Activated CD4-positive, alpha-beta T cell treated with anti-CD3 and anti-CD28 coated beads, Interleukin-2, amount 10 ng/mL, durations not matched to agents 7 days and 5 days (primary cell): ENCODE measurements at regions of chr2 and their contacts with region 1.

Region 1: DNA sequence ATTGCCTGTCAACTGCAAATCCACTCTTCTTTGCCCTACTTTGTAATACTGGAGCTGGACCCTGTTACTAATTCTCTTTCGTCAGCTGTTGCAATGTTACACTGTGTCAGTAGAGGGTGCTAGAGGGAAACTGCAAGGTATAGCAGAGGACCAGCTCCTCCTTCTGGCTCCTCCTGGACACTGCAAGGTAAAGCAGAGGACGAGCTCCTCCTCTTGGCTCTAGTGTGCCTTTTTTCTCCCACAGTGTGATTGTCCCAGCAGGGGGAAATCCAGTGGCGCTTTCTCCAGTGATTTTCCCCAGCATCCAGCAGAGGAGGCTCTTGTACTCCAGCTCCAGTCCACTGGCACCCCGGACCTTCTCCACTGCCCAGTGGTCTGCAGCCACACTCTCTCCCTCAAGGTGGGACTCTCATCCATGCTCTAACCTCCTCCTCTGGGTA is 95.6 kb downstream of the CAPN13 start:
- DNase-seq: peak; percentile 93
- H3K4me3 Mint-ChIP-seq: no peak overlapping the region
- H3K27ac Mint-ChIP-seq: no peak overlapping the region
- H3K4me1 Mint-ChIP-seq: peaks cover 6% of the 10 kb centered on the region
- H3K27me3 Mint-ChIP-seq: no peaks in the 10 kb centered on the region

Region 2: DNA sequence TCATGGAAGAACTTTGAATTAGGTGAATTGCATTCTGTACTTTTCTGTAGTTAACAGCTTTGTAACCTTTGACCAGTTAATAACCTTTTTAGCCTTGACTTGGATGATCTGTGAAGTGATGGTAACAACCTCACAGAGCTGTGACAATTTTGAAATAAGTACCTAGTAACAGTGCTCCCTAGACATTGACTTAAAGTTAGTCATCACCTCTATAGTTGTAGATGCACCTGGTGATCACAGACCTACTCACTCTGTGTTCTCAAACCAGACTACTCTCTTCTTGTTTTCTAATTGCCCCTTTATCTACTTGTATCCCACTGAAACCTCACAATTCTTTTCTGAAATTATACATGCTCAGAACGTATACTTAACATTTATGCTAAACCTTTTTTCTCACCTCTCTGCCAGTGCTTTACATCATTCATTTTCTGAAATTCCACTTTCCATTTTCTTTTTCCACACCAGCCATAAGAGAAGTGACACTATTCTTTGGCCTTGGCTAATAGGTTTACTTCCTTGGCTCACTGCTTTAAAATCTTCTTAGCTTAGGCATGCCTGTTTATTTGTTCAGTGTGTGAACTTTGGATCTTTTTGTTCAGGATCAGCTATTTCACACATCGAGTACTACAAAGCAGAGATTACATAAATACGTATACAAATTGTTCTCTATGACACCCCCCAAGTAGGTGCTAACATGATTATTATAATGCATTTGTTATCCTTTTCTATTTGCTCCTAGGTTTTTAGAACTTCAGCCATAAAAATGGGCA is 555.6 kb before region 1 on chr2:
- CTCF ChIA-PET with region 1: interaction called, 37 read pairs
- POLR2A ChIA-PET with region 1: no interaction called
- DNase-seq: no peak
- H3K4me3 Mint-ChIP-seq: no peak overlapping the region
- H3K27ac Mint-ChIP-seq: peak overlapping the region; percentile 6
- H3K4me1 Mint-ChIP-seq: peaks cover 13% of the 10 kb centered on the region
- H3K27me3 Mint-ChIP-seq: no peaks in the 10 kb centered on the region

Region 3: DNA sequence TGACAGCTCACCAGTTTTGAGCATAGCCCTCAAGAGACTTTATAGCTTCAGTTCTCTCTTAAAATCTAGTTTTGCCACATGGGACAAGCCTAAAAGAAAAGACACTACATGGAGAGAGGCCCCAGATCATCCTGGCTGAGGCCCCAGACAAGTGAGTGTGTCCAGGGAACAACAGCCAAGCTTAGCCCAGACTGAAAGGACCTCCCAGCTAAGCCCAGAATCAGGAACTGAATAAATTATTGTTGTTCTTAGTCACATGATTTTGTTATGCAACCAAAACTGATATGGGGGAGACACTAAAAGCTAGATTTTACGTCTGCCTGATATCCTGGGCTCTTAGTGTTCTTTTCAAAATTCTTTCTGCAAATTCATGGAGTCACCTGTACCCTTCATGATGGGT is 509.7 kb before region 1 on chr2:
- CTCF ChIA-PET with region 1: interaction called, 26 read pairs
- POLR2A ChIA-PET with region 1: no interaction called
- DNase-seq: no peak
- H3K4me3 Mint-ChIP-seq: no peak overlapping the region
- H3K27ac Mint-ChIP-seq: no peak overlapping the region
- H3K4me1 Mint-ChIP-seq: no peaks in the 10 kb centered on the region
- H3K27me3 Mint-ChIP-seq: peaks cover 3% of the 10 kb centered on the region

Region 4: GRCh38 chr2:30230497-30231211 is 481.0 kb before region 1 on chr2:
- CTCF ChIA-PET with region 1: interaction called, 14 read pairs
- POLR2A ChIA-PET with region 1: no interaction called
- DNase-seq: no peak
- H3K4me3 Mint-ChIP-seq: peak overlapping the region; percentile 79
- H3K27ac Mint-ChIP-seq: peak overlapping the region; percentile 71
- H3K4me1 Mint-ChIP-seq: peaks cover 55% of the 10 kb centered on the region
- H3K27me3 Mint-ChIP-seq: peaks cover 13% of the 10 kb centered on the region

Region 5: DNA sequence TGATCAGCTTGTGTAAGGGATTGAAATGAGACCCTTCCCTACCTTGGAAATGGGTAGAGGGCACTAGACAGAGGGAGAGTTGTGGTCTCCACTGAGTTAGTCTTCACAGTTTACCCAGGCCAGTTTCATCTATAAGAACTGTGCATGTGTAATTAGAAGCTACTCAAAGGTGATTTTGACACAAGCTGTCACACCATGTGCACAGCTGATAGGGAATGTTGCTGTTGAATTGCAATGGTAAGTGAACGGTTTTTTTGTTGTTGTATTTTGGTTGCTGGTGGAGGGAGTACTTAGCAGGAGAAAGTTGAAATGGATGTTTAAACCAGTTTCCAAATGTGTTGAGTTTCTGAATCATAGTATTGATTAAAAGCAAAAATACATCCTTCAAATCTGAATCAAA is 95.7 kb before region 1 on chr2:
- CTCF ChIA-PET with region 1: no interaction called
- POLR2A ChIA-PET with region 1: no interaction called
- DNase-seq: no peak
- H3K4me3 Mint-ChIP-seq: no peak overlapping the region
- H3K27ac Mint-ChIP-seq: no peak overlapping the region
- H3K4me1 Mint-ChIP-seq: no peaks in the 10 kb centered on the region
- H3K27me3 Mint-ChIP-seq: no peaks in the 10 kb centered on the region

Region 6: DNA sequence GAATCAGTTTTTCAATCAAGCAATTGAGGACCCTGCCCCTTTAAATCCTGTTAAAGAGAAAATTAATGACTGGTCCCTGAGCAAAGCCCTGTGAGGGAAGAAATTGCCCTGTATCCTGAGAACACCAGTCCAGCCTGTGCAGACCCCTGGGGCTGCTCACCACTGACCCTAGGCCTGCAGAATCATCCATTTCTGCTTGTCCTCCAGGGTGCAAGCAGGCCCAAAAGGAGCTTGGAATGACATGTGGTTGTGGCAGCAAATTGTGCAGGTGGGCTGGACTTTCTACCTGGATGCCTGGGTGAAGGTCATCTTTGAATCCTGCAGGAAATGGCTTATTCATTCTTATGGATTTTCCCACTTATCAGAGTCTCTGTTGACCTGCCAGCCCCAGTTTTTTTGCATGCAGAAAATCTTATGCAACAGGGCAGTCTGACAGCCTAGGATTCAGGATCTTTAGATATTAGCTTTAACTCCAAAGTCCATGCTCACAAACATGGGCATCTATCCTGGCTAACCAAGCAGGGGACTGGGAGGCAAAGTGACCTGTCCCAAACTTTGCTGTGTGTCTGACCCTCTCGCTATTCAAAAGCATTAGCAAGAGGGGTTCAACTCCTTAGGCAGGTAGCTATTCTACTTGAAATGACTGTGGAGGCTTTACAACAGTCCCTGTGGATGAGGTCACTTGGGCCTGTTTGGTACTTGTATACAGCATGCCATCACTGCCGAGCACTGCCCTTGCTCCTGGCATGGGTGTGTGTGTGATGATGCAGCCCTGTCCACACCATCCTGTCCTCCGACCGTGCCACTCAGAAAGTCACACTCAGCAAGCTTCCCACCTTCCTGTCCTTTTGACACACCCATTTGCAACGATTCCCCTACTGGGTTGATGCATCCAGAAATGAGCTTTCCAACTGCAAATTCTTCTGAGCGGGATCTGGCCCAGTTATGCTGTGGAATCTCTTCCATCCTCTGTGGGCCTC is 10.3 kb after region 1 on chr2:
- CTCF ChIA-PET with region 1: interaction called, 20 read pairs
- POLR2A ChIA-PET with region 1: no interaction called
- DNase-seq: no peak
- H3K4me3 Mint-ChIP-seq: no peak overlapping the region
- H3K27ac Mint-ChIP-seq: no peak overlapping the region
- H3K4me1 Mint-ChIP-seq: no peaks in the 10 kb centered on the region
- H3K27me3 Mint-ChIP-seq: peaks cover 10% of the 10 kb centered on the region

Region 7: GRCh38 chr2:31049916-31050588 is 338.4 kb after region 1 on chr2:
- CTCF ChIA-PET with region 1: no interaction called
- POLR2A ChIA-PET with region 1: no interaction called
- DNase-seq: no peak
- H3K4me3 Mint-ChIP-seq: no peak overlapping the region
- H3K27ac Mint-ChIP-seq: no peak overlapping the region
- H3K4me1 Mint-ChIP-seq: no peaks in the 10 kb centered on the region
- H3K27me3 Mint-ChIP-seq: no peaks in the 10 kb centered on the region

Region 8: GRCh38 chr2:31333527-31334183 is 622.0 kb after region 1 on chr2:
- CTCF ChIA-PET with region 1: interaction called, 20 read pairs
- POLR2A ChIA-PET with region 1: no interaction called
- DNase-seq: peak; percentile 86
- H3K4me3 Mint-ChIP-seq: no peak overlapping the region
- H3K27ac Mint-ChIP-seq: no peak overlapping the region
- H3K4me1 Mint-ChIP-seq: no peaks in the 10 kb centered on the region
- H3K27me3 Mint-ChIP-seq: peaks cover 8% of the 10 kb centered on the region